Activated B cell treated with CpG ODN at 0.5 μM for 24 hours (primary cell): ENCODE measurements at regions of chr10 and their contacts with region 1.

Region 1: DNA sequence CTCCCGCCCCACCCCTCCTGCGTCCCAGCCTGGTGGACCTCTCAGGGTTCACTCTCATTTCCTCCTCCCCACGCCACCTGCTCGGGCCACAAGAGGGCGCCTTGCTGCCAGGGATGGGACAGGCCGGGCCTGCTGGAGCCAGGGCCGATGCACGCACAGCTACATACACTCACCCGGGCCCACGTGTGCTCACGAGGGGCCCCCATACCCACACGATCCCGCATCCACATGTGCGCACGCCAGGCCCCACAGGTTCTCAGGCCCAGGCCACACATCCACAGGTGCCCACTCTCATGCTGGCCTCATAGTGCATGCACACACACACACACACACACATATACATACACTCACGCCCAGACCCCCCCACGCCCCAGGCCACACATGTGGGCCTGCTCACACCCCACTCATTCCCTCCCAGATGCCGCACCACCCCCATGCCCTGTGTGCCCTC is 68.6 kb downstream of the LHPP start:
- DNase-seq: peak; percentile 86
- ATAC-seq: peak; percentile 91
- H3K4me3 Mint-ChIP-seq: no peak overlapping the region
- H3K27ac Mint-ChIP-seq: peak overlapping the region; percentile 71
- H3K4me1 Mint-ChIP-seq: peaks cover 56% of the 10 kb centered on the region
- H3K27me3 Mint-ChIP-seq: no peaks in the 10 kb centered on the region
- CTCF ChIP-seq: no peak

Region 2: DNA sequence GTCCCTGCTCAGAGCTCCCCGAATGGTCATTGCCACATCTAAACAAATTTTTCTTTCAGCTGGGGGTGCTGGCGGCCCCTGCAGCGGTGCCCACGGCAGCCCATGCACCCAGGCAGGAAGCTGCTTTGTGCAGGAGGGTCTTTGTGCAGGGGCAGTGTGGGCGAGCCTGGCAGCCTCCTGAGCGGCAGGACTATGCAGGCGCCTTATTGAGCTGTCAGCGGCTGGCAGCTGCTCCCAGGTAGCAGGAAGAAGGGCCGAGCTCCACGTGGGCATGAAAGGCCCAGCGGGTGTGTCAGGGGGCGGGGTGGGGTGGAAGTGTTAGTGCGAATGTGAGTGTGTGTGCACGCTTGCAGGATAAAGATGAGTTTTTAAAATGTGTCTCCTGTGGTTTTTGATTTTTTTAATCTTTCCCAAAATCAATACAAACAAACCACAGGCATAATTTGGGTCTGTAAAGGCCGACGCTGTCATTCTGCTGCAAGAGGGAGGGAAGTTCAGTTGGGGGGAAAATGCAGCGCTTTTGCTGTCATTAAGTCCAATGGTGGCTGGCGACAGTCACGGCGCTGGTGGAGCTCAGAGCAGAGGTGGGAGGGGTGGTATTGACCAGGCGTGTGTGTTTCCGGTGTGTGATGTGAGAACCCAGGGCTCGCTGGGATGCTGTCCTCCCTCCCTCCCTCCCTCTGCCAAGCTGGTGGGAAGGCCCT is 15.3 kb after region 1 on chr10:
- CTCF ChIA-PET with region 1: interaction called, 29 read pairs
- POLR2A ChIA-PET with region 1: interaction called, 9 read pairs
- intact Hi-C with region 1: no loop called
- DNase-seq: no peak
- ATAC-seq: peak; percentile 7
- H3K4me3 Mint-ChIP-seq: peak overlapping the region; percentile 62
- H3K27ac Mint-ChIP-seq: peak overlapping the region; percentile 77
- H3K4me1 Mint-ChIP-seq: peaks cover 93% of the 10 kb centered on the region
- H3K27me3 Mint-ChIP-seq: no peaks in the 10 kb centered on the region
- CTCF ChIP-seq: no peak

Region 3: GRCh38 chr10:124565565-124566256 is 35.5 kb after region 1 on chr10:
- CTCF ChIA-PET with region 1: interaction called, 11 read pairs
- POLR2A ChIA-PET with region 1: interaction called, 3 read pairs
- intact Hi-C with region 1: loop called (anchors 2 kb)
- DNase-seq: no peak
- ATAC-seq: peak; percentile 30
- H3K4me3 Mint-ChIP-seq: no peak overlapping the region
- H3K27ac Mint-ChIP-seq: no peak overlapping the region
- H3K4me1 Mint-ChIP-seq: peaks cover 54% of the 10 kb centered on the region
- H3K27me3 Mint-ChIP-seq: no peaks in the 10 kb centered on the region
- CTCF ChIP-seq: no peak

Region 4: GRCh38 chr10:124827474-124827873 is 297.2 kb after region 1 on chr10:
- CTCF ChIA-PET with region 1: interaction called, 5 read pairs
- POLR2A ChIA-PET with region 1: interaction called, 8 read pairs
- intact Hi-C with region 1: loop called (anchors 1 kb)
- DNase-seq: no peak
- ATAC-seq: no peak
- H3K4me3 Mint-ChIP-seq: no peak overlapping the region
- H3K27ac Mint-ChIP-seq: no peak overlapping the region
- H3K4me1 Mint-ChIP-seq: no peaks in the 10 kb centered on the region
- H3K27me3 Mint-ChIP-seq: no peaks in the 10 kb centered on the region
- CTCF ChIP-seq: no peak

Region 5: GRCh38 chr10:125060826-125061556 is 530.8 kb after region 1 on chr10:
- CTCF ChIA-PET with region 1: no interaction called
- POLR2A ChIA-PET with region 1: no interaction called
- intact Hi-C with region 1: loop called (anchors 10 kb)
- DNase-seq: no peak
- ATAC-seq: no peak
- H3K4me3 Mint-ChIP-seq: no peak overlapping the region
- H3K27ac Mint-ChIP-seq: no peak overlapping the region
- H3K4me1 Mint-ChIP-seq: peaks cover 45% of the 10 kb centered on the region
- H3K27me3 Mint-ChIP-seq: peaks cover 48% of the 10 kb centered on the region
- CTCF ChIP-seq: no peak